ENCODE measurements at regions of chrX and their contacts with region 1.

Region 1: GRCh38 chrX:71652405-71652804 is 14.9 kb upstream of the LOC101059915 start:
- DNase-seq: peak in 8 of 9 experiments; percentile 27 to 78 (median 64)
- ATAC-seq: peak; percentile 80
- H3K4me3 ChIP-seq: no peak overlapping the region
- H3K4me3 Mint-ChIP-seq: no peak overlapping the region
- H3K27ac ChIP-seq: no peak overlapping the region
- H3K27ac Mint-ChIP-seq: no peak overlapping the region
- H3K4me1 ChIP-seq: peaks cover 7% of the 10 kb centered on the region
- H3K4me1 Mint-ChIP-seq: peaks cover 20% of the 10 kb centered on the region
- H3K27me3 ChIP-seq: no peaks in the 10 kb centered on the region
- H3K27me3 Mint-ChIP-seq: no peaks in the 10 kb centered on the region
- CTCF ChIP-seq: peak; percentile 56

Region 2: GRCh38 chrX:70970482-70970995 is 681.9 kb before region 1 on chrX:
- CTCF ChIA-PET with region 1: no interaction called
- POLR2A ChIA-PET with region 1: interaction called, 4 read pairs
- intact Hi-C with region 1: loop called in 1 of 2 experiments (anchors 2 kb)
- DNase-seq: peak in 2 of 9 experiments; percentile 15 to 29
- ATAC-seq: no peak
- H3K4me3 ChIP-seq: no peak overlapping the region
- H3K4me3 Mint-ChIP-seq: peak overlapping the region; percentile 62
- H3K27ac ChIP-seq: no peak overlapping the region
- H3K27ac Mint-ChIP-seq: no peak overlapping the region
- H3K4me1 ChIP-seq: no peaks in the 10 kb centered on the region
- H3K4me1 Mint-ChIP-seq: peaks cover 6% of the 10 kb centered on the region
- H3K27me3 ChIP-seq: no peaks in the 10 kb centered on the region
- H3K27me3 Mint-ChIP-seq: no peaks in the 10 kb centered on the region
- CTCF ChIP-seq: peak; percentile 33

Region 3: DNA sequence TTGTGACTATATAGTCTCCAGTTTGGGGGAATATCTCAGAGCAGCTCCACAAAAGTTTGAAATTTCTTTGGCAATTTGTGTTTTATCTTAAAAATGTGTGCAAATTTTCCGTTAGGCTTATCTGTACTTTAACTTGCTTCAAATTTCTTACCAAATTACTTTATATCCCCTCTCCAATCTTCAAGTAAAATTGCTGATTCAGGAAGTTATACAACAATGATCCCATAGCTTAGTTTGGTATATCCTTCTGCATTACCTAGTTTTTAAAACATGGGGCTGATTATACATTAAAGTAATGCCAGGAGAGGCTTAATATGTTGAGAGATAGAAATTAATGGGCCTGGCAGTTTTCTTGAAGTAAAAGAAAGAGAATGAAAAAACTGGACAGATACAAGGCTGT is 219.7 kb before region 1 on chrX:
- CTCF ChIA-PET with region 1: no interaction called
- POLR2A ChIA-PET with region 1: no interaction called
- intact Hi-C with region 1: loop called in 1 of 2 experiments (anchors 5 kb)
- DNase-seq: no peak
- ATAC-seq: no peak
- H3K4me3 ChIP-seq: no peak overlapping the region
- H3K4me3 Mint-ChIP-seq: no peak overlapping the region
- H3K27ac ChIP-seq: no peak overlapping the region
- H3K27ac Mint-ChIP-seq: no peak overlapping the region
- H3K4me1 ChIP-seq: no peaks in the 10 kb centered on the region
- H3K4me1 Mint-ChIP-seq: no peaks in the 10 kb centered on the region
- H3K27me3 ChIP-seq: no peaks in the 10 kb centered on the region
- H3K27me3 Mint-ChIP-seq: no peaks in the 10 kb centered on the region
- CTCF ChIP-seq: no peak

Region 4: GRCh38 chrX:71573591-71573990 is 78.8 kb before region 1 on chrX:
- CTCF ChIA-PET with region 1: interaction called, 3 read pairs
- POLR2A ChIA-PET with region 1: no interaction called
- intact Hi-C with region 1: loop called (anchors 5 kb)
- DNase-seq: no peak
- ATAC-seq: peak; percentile 31
- H3K4me3 ChIP-seq: no peak overlapping the region
- H3K4me3 Mint-ChIP-seq: no peak overlapping the region
- H3K27ac ChIP-seq: no peak overlapping the region
- H3K27ac Mint-ChIP-seq: peak overlapping the region; percentile 45
- H3K4me1 ChIP-seq: peaks cover 4% of the 10 kb centered on the region
- H3K4me1 Mint-ChIP-seq: peaks cover 18% of the 10 kb centered on the region
- H3K27me3 ChIP-seq: no peaks in the 10 kb centered on the region
- H3K27me3 Mint-ChIP-seq: no peaks in the 10 kb centered on the region
- CTCF ChIP-seq: no peak

Region 5: DNA sequence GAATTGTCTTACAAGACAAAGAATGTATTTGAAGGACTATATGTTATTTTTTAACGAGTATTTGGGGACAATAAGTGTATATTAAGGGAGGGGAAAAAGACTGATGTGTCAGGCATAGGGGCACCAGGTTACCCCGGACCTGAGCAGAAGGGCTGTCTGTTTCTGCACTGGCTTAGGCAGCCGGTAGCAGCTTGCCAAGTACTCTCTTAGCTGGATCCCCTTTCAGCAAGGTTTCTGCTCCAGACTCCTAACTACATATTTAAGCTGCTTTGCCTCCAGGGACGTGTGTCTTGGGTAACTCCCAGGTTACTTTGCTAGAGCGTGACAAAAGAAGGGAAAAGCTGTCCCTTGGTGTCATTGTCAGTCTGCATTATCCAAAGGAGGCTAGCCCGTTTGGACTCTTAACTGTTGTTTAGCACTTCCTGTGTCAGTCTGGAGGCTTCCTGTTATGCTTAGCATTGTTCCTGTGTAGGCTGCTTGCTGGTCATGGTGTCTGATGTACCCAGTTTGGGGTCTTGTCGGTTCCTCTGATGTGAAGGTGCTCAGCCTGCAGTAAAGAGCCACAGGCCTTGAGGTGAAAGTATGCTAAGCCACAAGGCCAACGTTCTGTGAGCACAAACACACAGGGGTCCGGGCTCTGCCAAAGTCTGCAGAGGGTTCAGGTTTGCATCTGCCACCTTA is 45.7 kb before region 1 on chrX:
- CTCF ChIA-PET with region 1: interaction called, 15 read pairs
- POLR2A ChIA-PET with region 1: no interaction called
- intact Hi-C with region 1: loop called in 1 of 2 experiments (anchors 2 kb)
- DNase-seq: peak in 8 of 9 experiments; percentile 19 to 84 (median 61)
- ATAC-seq: peak; percentile 84
- H3K4me3 ChIP-seq: no peak overlapping the region
- H3K4me3 Mint-ChIP-seq: peak overlapping the region; percentile 53
- H3K27ac ChIP-seq: peak overlapping the region; percentile 61 to 69
- H3K27ac Mint-ChIP-seq: peak overlapping the region; percentile 91
- H3K4me1 ChIP-seq: peaks cover 52% of the 10 kb centered on the region
- H3K4me1 Mint-ChIP-seq: peaks cover 70% of the 10 kb centered on the region
- H3K27me3 ChIP-seq: no peaks in the 10 kb centered on the region
- H3K27me3 Mint-ChIP-seq: no peaks in the 10 kb centered on the region
- CTCF ChIP-seq: no peak

Region 6: GRCh38 chrX:71622576-71623450 is 29.6 kb before region 1 on chrX:
- CTCF ChIA-PET with region 1: interaction called, 6 read pairs
- POLR2A ChIA-PET with region 1: interaction called, 7 read pairs
- intact Hi-C with region 1: loop called in 1 of 2 experiments (anchors 2 kb)
- DNase-seq: peak; percentile 39 to 90 (median 68)
- ATAC-seq: peak; percentile 53
- H3K4me3 ChIP-seq: peak overlapping the region; percentile 6 to 21
- H3K4me3 Mint-ChIP-seq: peak overlapping the region; percentile 63
- H3K27ac ChIP-seq: peak overlapping the region; percentile 59 to 85
- H3K27ac Mint-ChIP-seq: peak overlapping the region; percentile 93
- H3K4me1 ChIP-seq: peaks cover 63% of the 10 kb centered on the region
- H3K4me1 Mint-ChIP-seq: peaks cover 66% of the 10 kb centered on the region
- H3K27me3 ChIP-seq: no peaks in the 10 kb centered on the region
- H3K27me3 Mint-ChIP-seq: no peaks in the 10 kb centered on the region
- CTCF ChIP-seq: no peak

Region 7: DNA sequence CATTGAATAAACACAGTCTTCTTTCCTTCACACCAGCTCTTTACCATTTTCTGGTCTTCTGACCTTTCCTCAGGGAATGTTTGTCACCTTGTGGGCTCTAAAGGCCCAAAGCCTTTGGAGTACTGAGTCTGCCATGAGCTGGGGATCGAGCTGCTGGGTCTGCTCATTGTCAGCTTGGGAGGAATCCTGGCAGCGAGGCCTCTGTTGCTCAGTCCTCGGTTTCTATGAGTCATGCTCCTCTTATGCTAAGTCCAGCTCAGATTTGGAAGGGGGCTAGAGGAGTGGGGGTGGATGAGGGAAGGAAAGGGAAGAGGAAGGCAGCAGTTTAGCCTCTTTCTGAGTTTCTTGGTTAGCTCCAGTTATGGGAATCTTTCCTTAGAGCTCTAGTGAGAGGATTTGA is 289.4 kb after region 1 on chrX:
- CTCF ChIA-PET with region 1: no interaction called
- POLR2A ChIA-PET with region 1: no interaction called
- intact Hi-C with region 1: no loop called
- DNase-seq: no peak
- ATAC-seq: no peak
- H3K4me3 ChIP-seq: no peak overlapping the region
- H3K4me3 Mint-ChIP-seq: no peak overlapping the region
- H3K27ac ChIP-seq: no peak overlapping the region
- H3K27ac Mint-ChIP-seq: no peak overlapping the region
- H3K4me1 ChIP-seq: no peaks in the 10 kb centered on the region
- H3K4me1 Mint-ChIP-seq: no peaks in the 10 kb centered on the region
- H3K27me3 ChIP-seq: no peaks in the 10 kb centered on the region
- H3K27me3 Mint-ChIP-seq: no peaks in the 10 kb centered on the region
- CTCF ChIP-seq: no peak

Region 8: DNA sequence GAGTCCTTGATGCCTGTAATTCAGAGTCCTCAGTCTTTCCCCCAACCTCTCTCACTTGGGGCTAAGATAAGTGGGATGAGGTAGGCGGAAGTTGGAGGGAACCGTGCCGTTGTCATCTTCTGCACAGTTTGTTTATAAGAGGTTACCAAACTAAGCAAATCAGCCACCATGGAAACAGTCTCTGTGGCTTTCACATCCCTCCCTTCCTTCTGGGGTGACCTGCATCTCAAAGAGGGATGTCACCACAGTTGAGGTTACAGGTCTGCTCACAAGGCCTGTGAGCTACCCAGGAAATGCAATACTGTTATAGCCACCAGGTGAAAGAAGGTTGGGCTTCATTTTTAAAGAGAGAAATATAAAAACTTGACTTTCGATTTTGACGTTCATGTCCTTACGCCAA is 453.0 kb after region 1 on chrX:
- CTCF ChIA-PET with region 1: no interaction called
- POLR2A ChIA-PET with region 1: no interaction called
- intact Hi-C with region 1: no loop called
- DNase-seq: peak in 8 of 9 experiments; percentile 22 to 94 (median 56)
- ATAC-seq: peak; percentile 76
- H3K4me3 ChIP-seq: peak overlapping the region in 1 of 2 experiments; percentile 6
- H3K4me3 Mint-ChIP-seq: no peak overlapping the region
- H3K27ac ChIP-seq: peak overlapping the region; percentile 34 to 73
- H3K27ac Mint-ChIP-seq: peak overlapping the region; percentile 78
- H3K4me1 ChIP-seq: peaks cover 36% of the 10 kb centered on the region
- H3K4me1 Mint-ChIP-seq: peaks cover 49% of the 10 kb centered on the region
- H3K27me3 ChIP-seq: no peaks in the 10 kb centered on the region
- H3K27me3 Mint-ChIP-seq: peaks cover 16% of the 10 kb centered on the region
- CTCF ChIP-seq: no peak

Region 9: DNA sequence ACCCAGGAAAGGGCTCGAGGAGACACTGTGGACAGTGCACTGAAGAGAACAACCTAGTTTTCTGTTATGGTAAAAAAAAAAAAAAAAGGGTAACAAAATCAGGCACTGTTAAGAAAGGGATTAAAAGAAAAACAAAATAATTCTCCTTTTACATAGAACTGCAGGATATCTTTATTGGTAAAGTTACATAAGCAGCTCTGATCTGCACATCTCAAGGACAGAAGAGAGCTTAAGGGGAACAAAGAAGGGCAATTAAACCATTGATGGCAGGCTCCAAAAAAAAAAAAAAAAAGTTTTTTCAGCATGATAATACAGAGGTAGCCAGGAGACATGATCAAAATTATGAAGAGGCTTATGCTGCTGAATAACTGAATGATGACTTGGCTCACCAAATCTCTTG is 835.3 kb after region 1 on chrX:
- CTCF ChIA-PET with region 1: no interaction called
- POLR2A ChIA-PET with region 1: no interaction called
- intact Hi-C with region 1: no loop called
- DNase-seq: no peak
- ATAC-seq: no peak
- H3K4me3 ChIP-seq: no peak overlapping the region
- H3K4me3 Mint-ChIP-seq: no peak overlapping the region
- H3K27ac ChIP-seq: no peak overlapping the region
- H3K27ac Mint-ChIP-seq: no peak overlapping the region
- H3K4me1 ChIP-seq: no peaks in the 10 kb centered on the region
- H3K4me1 Mint-ChIP-seq: no peaks in the 10 kb centered on the region
- H3K27me3 ChIP-seq: no peaks in the 10 kb centered on the region
- H3K27me3 Mint-ChIP-seq: no peaks in the 10 kb centered on the region
- CTCF ChIP-seq: no peak

Measured in CD8-positive, alpha-beta T cell (primary cell).